GM10248 (cell line): ENCODE measurements at regions of chr10 and their contacts with region 1.

Region 1: GRCh38 chr10:118321724-118322575 is 20.2 kb downstream of the FAM204A start:
- DNase-seq: no peak
- CTCF ChIP-seq: no peak

Region 2: GRCh38 chr10:118272149-118272721 is 49.7 kb before region 1 on chr10:
- CTCF ChIA-PET with region 1: no interaction called
- POLR2A ChIA-PET with region 1: no interaction called
- DNase-seq: no peak
- CTCF ChIP-seq: no peak

Region 3: DNA sequence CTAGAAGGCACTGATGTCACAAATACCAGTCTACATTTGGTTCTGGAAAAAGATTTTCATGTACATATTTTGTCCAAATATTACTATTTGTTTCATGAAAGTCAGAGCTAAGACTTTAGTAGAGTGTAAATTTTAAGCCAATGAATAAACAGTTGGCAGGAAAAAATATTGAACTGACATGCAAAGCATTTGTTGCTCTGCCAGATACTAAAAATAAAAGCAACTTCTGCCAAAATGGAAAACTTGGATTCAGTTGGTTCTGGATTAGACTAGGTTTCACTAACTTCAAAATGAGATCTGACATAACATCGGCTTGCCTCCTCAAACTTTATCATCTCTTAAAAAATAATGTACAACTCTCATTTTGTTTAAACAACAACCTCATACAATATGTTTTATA is 14.7 kb before region 1 on chr10:
- CTCF ChIA-PET with region 1: interaction called, 10 read pairs
- POLR2A ChIA-PET with region 1: no interaction called
- DNase-seq: no peak
- CTCF ChIP-seq: no peak